AG04450 (cell line): ENCODE measurements at regions of chr22 and their contacts with region 1.

Region 1: GRCh38 chr22:17559188-17559587 is 4.1 kb upstream of the SLC25A18 start:
- DNase-seq: no peak
- H3K4me3 ChIP-seq: no peak overlapping the region
- H3K27ac ChIP-seq: no peak overlapping the region
- H3K27me3 ChIP-seq: peaks cover 13% of the 10 kb centered on the region
- CTCF ChIP-seq: no peak

Region 2: GRCh38 chr22:17570851-17571641 is 11.9 kb after region 1 on chr22:
- CTCF ChIA-PET with region 1: interaction called, 20 read pairs
- POLR2A ChIA-PET with region 1: no interaction called
- DNase-seq: no peak
- H3K4me3 ChIP-seq: peak overlapping the region; percentile 54
- H3K27ac ChIP-seq: peak overlapping the region; percentile 61
- H3K27me3 ChIP-seq: no peaks in the 10 kb centered on the region
- CTCF ChIP-seq: no peak

Region 3: GRCh38 chr22:17606496-17606895 is 47.3 kb after region 1 on chr22:
- CTCF ChIA-PET with region 1: interaction called, 10 read pairs
- POLR2A ChIA-PET with region 1: no interaction called
- DNase-seq: peak; percentile 16
- H3K4me3 ChIP-seq: no peak overlapping the region
- H3K27ac ChIP-seq: no peak overlapping the region
- H3K27me3 ChIP-seq: no peaks in the 10 kb centered on the region
- CTCF ChIP-seq: no peak

Region 4: DNA sequence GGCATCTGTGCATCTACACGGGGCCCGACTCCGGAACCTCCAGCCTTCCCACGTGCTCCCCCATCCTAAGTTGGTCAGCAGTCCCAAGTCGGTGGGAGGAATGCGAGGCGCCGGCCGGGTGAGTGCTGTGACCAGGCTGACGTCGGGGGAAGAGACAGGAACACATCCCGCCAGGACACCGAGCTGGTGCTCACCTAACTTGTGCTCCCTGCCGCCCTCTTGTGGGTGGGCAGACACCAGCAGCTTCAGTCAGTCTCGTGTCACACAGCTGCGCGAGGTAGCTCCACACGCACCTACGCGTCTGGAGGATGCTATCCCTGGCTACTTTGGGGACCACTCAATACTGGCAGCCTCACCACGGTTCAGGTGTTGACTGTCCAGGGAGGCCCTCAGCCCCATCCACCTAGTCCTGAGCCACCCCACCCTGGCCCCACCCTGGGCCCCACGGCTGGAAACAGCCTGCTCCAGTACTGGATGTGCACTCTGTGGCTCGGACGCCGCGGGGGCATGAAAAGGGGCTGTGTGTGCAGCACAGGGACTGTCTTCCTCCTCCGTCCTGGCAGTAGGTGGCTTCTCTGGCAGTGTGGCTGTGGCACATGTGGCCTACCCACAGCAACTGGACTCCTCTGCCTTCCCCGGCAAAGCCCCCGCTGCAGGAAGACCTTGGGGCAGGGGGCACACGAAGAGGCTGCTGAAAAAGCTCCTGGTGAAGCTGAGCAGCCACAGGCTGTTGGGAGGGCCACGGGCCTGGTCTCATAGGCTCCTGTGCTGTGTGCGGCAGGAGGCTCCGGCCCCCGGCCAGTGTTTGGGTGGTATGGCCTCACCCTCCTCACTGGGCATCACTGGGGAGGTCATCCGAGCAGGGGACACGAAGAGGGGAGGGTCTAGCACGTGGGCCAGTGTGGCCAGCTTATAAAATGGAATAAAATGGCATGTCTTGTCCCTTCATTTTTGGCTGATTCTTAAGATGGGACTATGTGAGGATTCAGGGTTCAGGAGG is 226.3 kb after region 1 on chr22:
- CTCF ChIA-PET with region 1: interaction called, 29 read pairs
- POLR2A ChIA-PET with region 1: no interaction called
- DNase-seq: no peak
- H3K4me3 ChIP-seq: no peak overlapping the region
- H3K27ac ChIP-seq: no peak overlapping the region
- H3K27me3 ChIP-seq: no peaks in the 10 kb centered on the region
- CTCF ChIP-seq: peak; percentile 47